Activated CD4-positive, alpha-beta memory T cell treated with anti-CD3 and anti-CD28 coated beads for 36 hours (primary cell): ENCODE measurements at regions of chr15 and their contacts with region 1.

Region 1: GRCh38 chr15:55434989-55435825 is 26.9 kb downstream of the PIERCE2 start:
- DNase-seq: no peak
- H3K4me3 Mint-ChIP-seq: no peak overlapping the region
- H3K27ac Mint-ChIP-seq: no peak overlapping the region
- H3K4me1 Mint-ChIP-seq: peaks cover 6% of the 10 kb centered on the region
- H3K27me3 Mint-ChIP-seq: peaks cover 1% of the 10 kb centered on the region

Region 2: DNA sequence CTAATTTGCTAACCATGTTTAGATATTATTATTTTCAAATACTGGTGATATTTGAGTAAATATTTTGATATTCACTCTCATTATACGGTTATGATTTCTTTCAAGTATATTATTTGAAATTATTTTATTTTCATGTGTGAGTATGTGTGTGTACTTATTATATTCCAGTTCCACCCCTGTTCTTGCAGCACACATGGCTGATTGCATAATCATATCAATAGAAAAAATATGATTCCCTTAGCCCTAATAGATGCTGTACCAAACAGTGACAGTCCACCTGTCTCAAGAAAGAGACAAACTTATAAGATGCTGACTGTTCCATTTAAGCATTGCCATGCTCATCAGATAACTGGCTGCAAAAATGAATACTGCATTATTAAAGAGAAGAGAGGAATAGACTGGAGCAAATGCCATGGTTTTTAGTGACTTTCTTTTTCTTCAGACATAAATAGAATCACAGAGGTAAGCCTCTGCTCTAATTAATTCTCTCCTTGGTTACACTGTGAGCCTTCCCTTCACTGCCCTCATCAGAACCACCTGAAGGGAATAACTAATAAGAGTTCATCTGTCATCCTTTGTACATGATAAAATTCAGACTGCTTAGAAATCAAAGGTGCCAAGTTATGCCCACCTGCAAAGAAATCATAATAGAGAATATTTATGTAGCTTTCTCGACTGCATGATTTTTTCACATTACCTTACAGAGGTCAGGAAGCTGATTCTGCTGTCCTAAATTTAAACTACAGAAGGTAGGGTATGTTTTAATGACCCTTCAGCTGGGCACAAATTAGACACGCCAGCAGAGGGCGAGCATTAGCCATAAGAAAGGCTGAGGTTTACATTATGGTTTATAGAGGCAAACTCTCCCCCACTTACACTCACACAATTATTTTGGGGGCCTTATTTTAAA is 1472.6 kb before region 1 on chr15:
- CTCF ChIA-PET with region 1: interaction called, 7 read pairs
- POLR2A ChIA-PET with region 1: no interaction called
- intact Hi-C with region 1: loop called (anchors 5 kb)
- DNase-seq: peak; percentile 37
- H3K4me3 Mint-ChIP-seq: no peak overlapping the region
- H3K27ac Mint-ChIP-seq: no peak overlapping the region
- H3K4me1 Mint-ChIP-seq: no peaks in the 10 kb centered on the region
- H3K27me3 Mint-ChIP-seq: peaks cover 4% of the 10 kb centered on the region

Region 3: GRCh38 chr15:55196458-55197361 is 238.5 kb before region 1 on chr15 and contains the start of gene RSL24D1:
- CTCF ChIA-PET with region 1: interaction called, 3 read pairs
- POLR2A ChIA-PET with region 1: no interaction called
- intact Hi-C with region 1: loop called (anchors 5 kb)
- DNase-seq: peak; percentile 98
- H3K4me3 Mint-ChIP-seq: no peak within 1 kb of the TSS
- H3K27ac Mint-ChIP-seq: no peak within 1 kb of the TSS
- H3K4me1 Mint-ChIP-seq: peaks cover 22% of the 10 kb centered on the region
- H3K27me3 Mint-ChIP-seq: no peaks in the 10 kb centered on the region
- total RNA-seq, gene RSL24D1: 157 to 163 TPM

Region 4: GRCh38 chr15:55221090-55222011 is 213.9 kb before region 1 on chr15:
- CTCF ChIA-PET with region 1: interaction called, 22 read pairs
- POLR2A ChIA-PET with region 1: no interaction called
- intact Hi-C with region 1: loop called (anchors 5 kb)
- DNase-seq: peak; percentile 72
- H3K4me3 Mint-ChIP-seq: peak overlapping the region; percentile 47
- H3K27ac Mint-ChIP-seq: peak overlapping the region; percentile 91
- H3K4me1 Mint-ChIP-seq: peaks cover 76% of the 10 kb centered on the region
- H3K27me3 Mint-ChIP-seq: no peaks in the 10 kb centered on the region

Region 5: GRCh38 chr15:55318588-55319494 is 116.4 kb before region 1 on chr15 and contains the starts of genes PIGB and PIGBOS1:
- CTCF ChIA-PET with region 1: interaction called, 13 read pairs
- POLR2A ChIA-PET with region 1: no interaction called
- intact Hi-C with region 1: loop called (anchors 5 kb)
- DNase-seq: peak; percentile 87
- H3K4me3 Mint-ChIP-seq: peak within 1 kb of the TSS; percentile 97
- H3K27ac Mint-ChIP-seq: peak within 1 kb of the TSS; percentile 98
- H3K4me1 Mint-ChIP-seq: peaks cover 48% of the 10 kb centered on the region
- H3K27me3 Mint-ChIP-seq: no peaks in the 10 kb centered on the region
- total RNA-seq, gene PIGB: 18.0 to 18.9 TPM
- total RNA-seq, gene PIGBOS1: 10.5 to 11.1 TPM

Region 6: GRCh38 chr15:55422089-55422488 is 13.1 kb before region 1 on chr15:
- CTCF ChIA-PET with region 1: interaction called, 10 read pairs
- POLR2A ChIA-PET with region 1: no interaction called
- intact Hi-C with region 1: no loop called
- DNase-seq: no peak
- H3K4me3 Mint-ChIP-seq: no peak overlapping the region
- H3K27ac Mint-ChIP-seq: no peak overlapping the region
- H3K4me1 Mint-ChIP-seq: no peaks in the 10 kb centered on the region
- H3K27me3 Mint-ChIP-seq: no peaks in the 10 kb centered on the region